Panc1 (cell line): ENCODE measurements at regions of chr9 and their contacts with region 1.

Region 1: DNA sequence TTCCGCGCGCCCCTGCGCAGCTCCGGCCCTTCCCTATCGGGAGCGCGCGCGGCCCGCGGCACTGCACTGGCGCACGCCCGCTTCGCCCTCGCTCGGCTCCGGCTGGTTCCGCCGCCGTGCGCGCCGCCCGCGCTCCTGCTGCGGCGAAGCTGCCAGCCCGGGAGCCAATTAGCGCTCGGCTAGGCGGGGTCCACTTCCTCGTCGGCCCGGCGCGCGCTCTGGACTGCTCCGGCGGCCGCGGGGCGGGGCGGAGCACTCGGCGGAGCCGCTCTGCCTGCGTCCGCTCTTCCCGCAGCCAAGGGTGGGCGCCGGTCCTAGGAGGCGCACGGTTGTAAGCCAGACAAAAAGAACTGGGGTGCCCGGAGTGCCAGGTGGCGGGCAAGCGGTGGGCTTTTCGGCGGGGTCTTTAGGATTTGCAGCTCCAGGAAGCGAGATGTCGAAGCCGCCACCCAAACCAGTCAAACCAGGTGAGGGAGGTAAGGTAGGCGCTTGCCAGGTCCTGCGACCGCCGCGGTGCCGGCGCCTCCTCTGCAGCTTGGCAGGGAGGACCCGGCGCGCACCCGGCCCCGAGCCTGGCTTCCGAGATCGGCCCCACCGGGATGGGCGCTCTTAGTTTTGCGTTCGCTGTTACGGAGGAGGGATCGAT is at the start of gene OSTF1:
- DNase-seq: no peak
- ATAC-seq: peak; percentile 97
- H3K4me3 ChIP-seq: peak within 1 kb of the TSS; percentile 78 to 89
- H3K27ac ChIP-seq: peak within 1 kb of the TSS; percentile 84
- H3K4me1 ChIP-seq: peaks cover 9% of the 10 kb centered on the region
- H3K27me3 ChIP-seq: no peaks in the 10 kb centered on the region
- CTCF ChIP-seq: no peak
- total RNA-seq, gene OSTF1: 24.6 TPM

Region 2: DNA sequence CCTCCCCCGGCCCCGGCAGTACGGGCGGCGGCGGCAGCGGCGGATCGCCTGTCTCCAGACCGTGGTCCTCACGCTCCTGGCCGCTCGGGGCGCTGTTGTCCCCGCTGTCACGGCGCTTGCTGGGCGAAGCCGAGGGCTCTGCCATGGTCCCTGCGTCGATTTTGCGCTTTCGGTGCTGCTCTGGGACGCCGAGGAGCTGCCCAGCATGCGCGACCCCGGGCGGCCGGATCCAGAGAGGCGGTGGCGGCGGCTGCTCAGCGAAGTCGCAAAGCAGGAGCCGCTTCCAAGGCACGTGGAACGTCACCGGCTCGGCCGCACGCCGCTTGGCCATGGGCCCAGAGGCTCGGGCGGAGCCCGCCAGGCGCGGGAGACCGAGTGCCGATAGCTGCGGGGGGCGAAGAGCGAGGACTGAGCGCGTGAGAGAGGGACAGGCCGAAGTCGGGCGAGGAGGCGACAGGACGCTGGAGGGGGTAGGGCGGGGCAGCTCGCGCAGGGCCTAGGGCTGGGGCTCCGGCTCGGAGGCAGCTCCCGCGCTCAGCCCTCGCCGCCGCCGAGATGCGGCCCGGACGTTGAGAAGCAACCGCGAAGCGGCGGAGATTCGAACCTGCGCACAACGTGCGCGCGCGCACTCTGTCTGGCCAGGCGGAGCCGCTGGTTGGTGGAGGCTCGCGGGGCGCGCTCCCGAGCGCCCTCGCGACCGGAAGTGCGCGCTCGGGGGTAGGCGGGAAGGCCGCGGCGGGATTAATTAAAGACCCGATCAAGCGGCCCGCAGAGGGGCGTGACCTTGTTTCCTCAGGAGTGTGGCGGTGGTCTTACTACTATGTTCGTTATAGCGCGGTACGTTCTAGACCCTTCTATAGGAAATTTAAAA is 135.9 kb before region 1 on chr9 and contains the start of gene C9orf40:
- CTCF ChIA-PET with region 1: no interaction called
- POLR2A ChIA-PET with region 1: no interaction called
- in situ Hi-C with region 1: no loop called
- intact Hi-C with region 1: loop called (anchors 10 kb)
- DNase-seq: peak; percentile 43
- ATAC-seq: peak; percentile 94
- H3K4me3 ChIP-seq: peak within 1 kb of the TSS; percentile 87
- H3K27ac ChIP-seq: peak within 1 kb of the TSS; percentile 87
- H3K4me1 ChIP-seq: no peaks in the 10 kb centered on the region; the same call in 1 of the 2 replicates
- H3K27me3 ChIP-seq: no peaks in the 10 kb centered on the region
- CTCF ChIP-seq: peak; percentile 87
- total RNA-seq, gene C9orf40: 9.2 TPM

Region 3: DNA sequence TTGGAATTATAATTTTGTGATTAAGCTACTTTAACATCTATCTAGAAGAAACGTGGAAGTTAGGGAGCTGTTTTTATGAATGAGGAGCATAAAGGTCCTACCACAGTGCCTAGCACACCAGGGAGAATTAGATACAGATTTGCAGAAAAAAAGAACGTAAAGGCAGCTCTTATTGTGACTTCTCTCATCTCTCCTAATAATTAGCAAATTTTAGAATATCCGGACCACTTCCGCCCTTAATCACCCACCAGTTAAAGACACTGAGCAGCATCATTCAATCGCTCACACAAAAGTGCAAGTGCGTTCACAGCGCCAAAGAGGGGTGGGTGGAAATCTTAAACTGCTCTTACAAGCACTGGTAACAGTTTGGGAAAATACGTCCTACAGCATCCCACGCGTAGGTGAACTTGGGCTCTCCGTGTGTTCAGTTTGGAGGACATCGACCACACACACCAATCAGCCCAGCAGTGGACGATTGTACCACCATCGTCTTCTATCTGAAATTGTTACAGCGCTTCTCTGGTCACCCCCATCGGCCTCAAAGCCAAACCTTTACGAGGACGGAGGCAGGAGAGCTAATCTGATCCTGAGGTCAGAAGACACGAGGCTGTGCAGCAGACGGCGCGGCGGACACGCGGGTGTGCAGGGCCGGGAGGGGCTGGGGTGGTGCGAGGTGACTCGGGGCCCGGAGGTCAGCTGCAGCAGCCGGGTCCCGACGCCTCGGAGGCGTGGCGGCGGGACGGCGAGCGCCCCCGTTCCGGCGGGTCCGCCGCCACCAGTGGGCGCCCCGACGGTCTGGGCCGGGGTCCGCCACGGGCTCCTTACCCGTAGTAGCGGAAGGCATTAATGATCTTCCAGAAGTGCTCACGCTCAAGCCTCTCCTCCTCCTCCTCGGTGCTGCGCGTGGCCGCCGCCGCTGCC is 60.9 kb before region 1 on chr9:
- CTCF ChIA-PET with region 1: interaction called, 3 read pairs
- POLR2A ChIA-PET with region 1: no interaction called
- in situ Hi-C with region 1: no loop called
- intact Hi-C with region 1: loop called (anchors 10 kb)
- DNase-seq: no peak
- ATAC-seq: peak; percentile 78
- H3K4me3 ChIP-seq: peak overlapping the region; percentile 72 to 73
- H3K27ac ChIP-seq: peak overlapping the region; percentile 85
- H3K4me1 ChIP-seq: peaks cover 11% of the 10 kb centered on the region; the same call in 1 of the 2 replicates
- H3K27me3 ChIP-seq: no peaks in the 10 kb centered on the region
- CTCF ChIP-seq: no peak